Panc1 (cell line): ENCODE measurements at regions of chr10 and their contacts with region 1.

Region 1: DNA sequence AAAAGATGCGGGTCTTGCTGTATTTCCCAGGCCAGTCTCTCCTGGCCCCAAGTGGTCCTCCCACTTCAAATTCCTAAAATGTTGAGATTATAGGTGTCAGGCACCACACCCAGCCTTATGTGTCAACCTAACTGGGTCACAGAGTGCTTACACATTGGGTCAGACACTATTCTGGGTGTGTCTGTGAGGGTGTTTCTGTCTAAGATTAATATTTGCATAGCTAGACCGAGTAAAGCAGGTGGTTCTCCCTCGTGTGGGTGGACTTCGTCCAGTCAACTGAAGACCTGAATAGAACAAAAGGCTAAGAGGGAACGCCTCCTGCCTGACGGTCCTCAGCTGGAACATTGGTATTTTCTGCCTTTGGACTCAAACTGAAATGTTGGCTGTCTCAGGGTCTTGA is 11.5 kb downstream of the PPIF start:
- DNase-seq: no peak
- ATAC-seq: no peak
- H3K4me3 ChIP-seq: no peak overlapping the region
- H3K27ac ChIP-seq: no peak overlapping the region
- H3K4me1 ChIP-seq: no peaks in the 10 kb centered on the region
- H3K27me3 ChIP-seq: peaks cover 3% of the 10 kb centered on the region; the same call in 1 of the 2 replicates
- CTCF ChIP-seq: no peak

Region 2: GRCh38 chr10:79316671-79317431 is 41.9 kb before region 1 on chr10:
- CTCF ChIA-PET with region 1: interaction called, 10 read pairs
- POLR2A ChIA-PET with region 1: no interaction called
- in situ Hi-C with region 1: no loop called
- intact Hi-C with region 1: no loop called
- DNase-seq: no peak
- ATAC-seq: peak; percentile 23
- H3K4me3 ChIP-seq: no peak overlapping the region
- H3K27ac ChIP-seq: no peak overlapping the region
- H3K4me1 ChIP-seq: no peaks in the 10 kb centered on the region; the same call in none of the 2 replicates
- H3K27me3 ChIP-seq: no peaks in the 10 kb centered on the region
- CTCF ChIP-seq: no peak